B cell (primary cell): ENCODE measurements at regions of chr11 and their contacts with region 1.

Region 1: DNA sequence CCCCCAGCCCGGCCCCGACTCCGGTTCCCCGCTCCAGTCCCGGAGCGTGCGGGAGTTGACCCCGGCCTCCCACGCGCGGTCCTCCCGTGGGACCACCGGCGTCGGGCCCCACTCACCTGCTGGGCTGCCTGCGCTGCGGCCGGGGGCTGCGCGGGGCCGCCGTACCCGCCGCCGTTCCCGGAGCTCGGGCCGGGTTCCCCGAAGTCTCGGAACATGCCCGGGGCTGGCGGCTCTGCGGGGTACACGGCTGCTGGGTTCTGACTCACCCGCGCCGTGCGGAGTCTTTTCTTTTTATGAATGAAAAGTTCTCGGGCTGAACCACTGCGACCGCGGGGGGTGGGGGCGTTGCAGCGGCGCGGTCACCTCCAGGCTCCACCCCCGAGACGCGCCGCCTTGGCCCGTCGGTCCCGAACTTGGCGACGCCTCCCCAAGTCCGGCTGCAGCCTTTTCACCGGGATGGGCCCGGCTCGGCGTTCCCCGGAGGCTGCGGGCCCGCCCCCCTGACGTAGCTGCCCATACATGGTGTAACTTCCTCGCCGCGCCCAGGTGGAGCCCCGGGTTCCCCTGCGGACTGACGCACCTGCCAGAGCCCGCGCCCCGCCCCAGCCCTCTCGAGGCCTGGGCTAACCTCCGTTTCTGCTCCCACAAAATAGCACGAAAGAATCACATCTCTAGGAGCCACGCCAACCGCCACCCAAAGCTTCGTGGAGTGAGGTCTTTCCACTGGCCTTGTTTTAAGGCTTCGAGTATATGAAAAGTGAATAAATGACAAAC is at the start of gene FOSL1:
- DNase-seq: peak; percentile 96
- ATAC-seq: peak; percentile 95
- H3K4me3 ChIP-seq: peak within 1 kb of the TSS; percentile 2 to 64 (median 52)
- H3K4me3 Mint-ChIP-seq: peak within 1 kb of the TSS; percentile 83
- H3K27ac ChIP-seq: no peak within 1 kb of the TSS
- H3K27ac Mint-ChIP-seq: peak within 1 kb of the TSS; percentile 72
- H3K4me1 ChIP-seq: peaks cover 20% of the 10 kb centered on the region in 2 donors
- H3K4me1 Mint-ChIP-seq: peaks cover 10% of the 10 kb centered on the region
- H3K27me3 ChIP-seq: peaks cover 0 to 38% (median 12%) of the 10 kb centered on the region in 4 experiments
- H3K27me3 Mint-ChIP-seq: peaks cover 15% of the 10 kb centered on the region
- CTCF ChIP-seq: no peak
- total RNA-seq, gene FOSL1: not detected in 2 replicates

Region 2: DNA sequence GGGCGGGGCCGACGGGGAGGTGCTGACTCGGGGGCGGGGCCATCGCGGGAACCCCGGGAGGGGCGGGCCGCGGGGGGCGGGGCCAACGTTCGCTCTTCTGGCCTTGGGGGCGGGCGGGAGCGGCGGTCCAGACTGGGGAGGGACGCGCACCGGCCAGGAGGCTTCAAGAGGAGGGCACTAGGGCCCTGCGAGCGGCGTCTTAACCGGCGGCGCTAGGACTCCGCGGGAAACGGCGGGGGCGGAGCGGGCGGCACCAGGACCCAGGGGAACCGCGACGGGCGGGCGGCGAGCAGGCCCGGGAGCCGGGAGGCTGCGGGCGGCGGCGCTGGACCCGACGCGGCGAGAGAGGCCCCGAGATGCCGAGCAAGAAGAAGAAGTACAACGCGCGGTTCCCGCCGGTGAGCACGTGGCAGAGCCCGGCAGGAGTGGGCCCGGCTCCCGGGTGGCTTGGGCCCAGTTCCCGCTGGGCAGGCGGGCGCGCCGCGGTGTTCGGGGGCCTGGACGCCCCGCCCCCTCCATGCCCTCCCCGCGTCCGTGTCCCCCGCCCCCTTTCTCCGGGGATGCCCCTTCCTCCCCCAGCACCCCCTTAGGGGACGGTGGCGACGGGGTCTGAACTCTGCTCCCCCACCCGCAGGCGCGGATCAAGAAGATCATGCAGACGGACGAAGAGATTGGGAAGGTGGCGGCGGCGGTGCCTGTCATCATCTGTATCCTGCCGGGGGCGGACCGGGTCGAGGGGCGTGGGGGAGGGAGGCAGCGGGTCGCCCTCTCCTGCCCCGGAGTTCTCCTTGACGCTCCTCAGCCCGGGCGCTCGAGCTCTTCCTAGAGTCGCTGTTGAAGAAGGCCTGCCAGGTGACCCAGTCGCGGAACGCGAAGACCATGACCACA is 19.1 kb after region 1 on chr11 and contains the start of gene DRAP1:
- CTCF ChIA-PET with region 1: interaction called, 3 read pairs
- POLR2A ChIA-PET with region 1: interaction called, 3 read pairs
- intact Hi-C with region 1: loop called (anchors 1 kb)
- DNase-seq: peak; percentile 98
- ATAC-seq: peak; percentile 87
- H3K4me3 ChIP-seq: peak within 1 kb of the TSS; percentile 83 to 99 (median 93)
- H3K4me3 Mint-ChIP-seq: peak within 1 kb of the TSS; percentile 95
- H3K27ac ChIP-seq: peak within 1 kb of the TSS; percentile 66 to 85
- H3K27ac Mint-ChIP-seq: peak within 1 kb of the TSS; percentile 89
- H3K4me1 ChIP-seq: peaks cover 19 to 50% of the 10 kb centered on the region in 2 donors
- H3K4me1 Mint-ChIP-seq: peaks cover 44% of the 10 kb centered on the region
- H3K27me3 ChIP-seq: no peaks in the 10 kb centered on the region
- H3K27me3 Mint-ChIP-seq: no peaks in the 10 kb centered on the region
- CTCF ChIP-seq: no peak
- total RNA-seq, gene DRAP1: 62.9 and 71.7 TPM in 2 replicates